WTC11 (cell line): ENCODE measurements at regions of chr5 and their contacts with region 1.

Region 1: GRCh38 chr5:41903892-41904799 is at the start of gene RIMOC1:
- DNase-seq: peak; percentile 98
- ATAC-seq: peak; percentile 99
- H3K4me3 Mint-ChIP-seq: peak within 1 kb of the TSS; percentile 99
- H3K27ac Mint-ChIP-seq: peak within 1 kb of the TSS; percentile 99
- H3K4me1 Mint-ChIP-seq: peaks cover 17% of the 10 kb centered on the region
- H3K27me3 Mint-ChIP-seq: peaks cover 7% of the 10 kb centered on the region
- CTCF ChIP-seq: no peak
- total RNA-seq, gene RIMOC1: 27.1 to 30.5 TPM (median 28.8 TPM) in 3 replicates

Region 2: GRCh38 chr5:41856644-41857491 is 47.3 kb before region 1 on chr5:
- CTCF ChIA-PET with region 1: interaction called, 13 read pairs
- POLR2A ChIA-PET with region 1: no interaction called
- DNase-seq: peak; percentile 30
- ATAC-seq: peak; percentile 98
- H3K4me3 Mint-ChIP-seq: no peak overlapping the region
- H3K27ac Mint-ChIP-seq: no peak overlapping the region
- H3K4me1 Mint-ChIP-seq: no peaks in the 10 kb centered on the region
- H3K27me3 Mint-ChIP-seq: no peaks in the 10 kb centered on the region
- CTCF ChIP-seq: peak; percentile 40